ENCODE measurements at regions of chr17 and their contacts with region 1.

Region 1: DNA sequence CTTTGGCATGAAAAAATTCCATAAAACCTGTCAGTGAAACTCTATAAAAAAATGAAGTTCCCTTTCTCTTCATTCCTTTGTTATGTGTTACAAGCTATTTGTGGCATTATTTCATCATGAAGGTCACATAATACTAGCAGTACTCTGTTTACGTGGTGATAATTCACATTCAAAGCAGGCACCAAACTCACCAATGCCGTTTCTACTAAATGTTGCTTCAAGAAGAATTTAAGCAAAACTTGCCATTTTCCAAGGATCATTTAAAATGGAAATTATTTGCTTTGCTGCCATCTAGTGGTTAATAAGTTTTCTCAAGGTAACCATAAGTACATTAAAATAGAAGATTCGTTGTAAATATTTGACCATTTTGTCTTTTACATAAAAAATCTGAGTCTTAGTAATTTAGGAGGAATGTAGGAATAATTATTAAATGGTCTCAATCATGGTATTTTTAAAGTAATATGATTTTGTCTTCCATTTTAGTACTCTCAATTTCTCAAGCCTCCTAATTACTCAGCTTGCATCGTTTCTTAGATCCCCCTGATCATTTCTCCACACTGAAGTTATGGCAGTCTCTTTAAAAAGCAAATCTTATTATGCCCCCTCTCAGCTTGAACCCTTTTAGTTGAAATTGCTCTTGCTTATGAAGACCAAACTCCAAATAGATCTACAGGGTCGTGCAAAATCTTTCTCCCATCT is 80.8 kb downstream of the OMG start:
- DNase-seq: peak; percentile 59
- H3K4me3 ChIP-seq: no peak overlapping the region
- H3K27ac ChIP-seq: no peak overlapping the region
- H3K27me3 ChIP-seq: no peaks in the 10 kb centered on the region
- CTCF ChIP-seq: peak; percentile 49

Region 2: GRCh38 chr17:30970831-30971567 is 245.2 kb before region 1 on chr17 and contains the start of gene RNF135:
- CTCF ChIA-PET with region 1: interaction called, 10 read pairs
- POLR2A ChIA-PET with region 1: no interaction called
- DNase-seq: peak; percentile 59
- H3K4me3 ChIP-seq: peak within 1 kb of the TSS; percentile 71
- H3K27ac ChIP-seq: peak within 1 kb of the TSS; percentile 77
- H3K27me3 ChIP-seq: no peaks in the 10 kb centered on the region
- CTCF ChIP-seq: peak; percentile 25
- polyA plus RNA-seq, gene RNF135: 14.6 and 15.9 TPM in 2 replicates

Region 3: GRCh38 chr17:31008374-31009041 is 207.7 kb before region 1 on chr17:
- CTCF ChIA-PET with region 1: interaction called, 13 read pairs
- POLR2A ChIA-PET with region 1: no interaction called
- DNase-seq: no peak
- H3K4me3 ChIP-seq: peak overlapping the region; percentile 55
- H3K27ac ChIP-seq: peak overlapping the region; percentile 31
- H3K27me3 ChIP-seq: no peaks in the 10 kb centered on the region
- CTCF ChIP-seq: no peak

Region 4: DNA sequence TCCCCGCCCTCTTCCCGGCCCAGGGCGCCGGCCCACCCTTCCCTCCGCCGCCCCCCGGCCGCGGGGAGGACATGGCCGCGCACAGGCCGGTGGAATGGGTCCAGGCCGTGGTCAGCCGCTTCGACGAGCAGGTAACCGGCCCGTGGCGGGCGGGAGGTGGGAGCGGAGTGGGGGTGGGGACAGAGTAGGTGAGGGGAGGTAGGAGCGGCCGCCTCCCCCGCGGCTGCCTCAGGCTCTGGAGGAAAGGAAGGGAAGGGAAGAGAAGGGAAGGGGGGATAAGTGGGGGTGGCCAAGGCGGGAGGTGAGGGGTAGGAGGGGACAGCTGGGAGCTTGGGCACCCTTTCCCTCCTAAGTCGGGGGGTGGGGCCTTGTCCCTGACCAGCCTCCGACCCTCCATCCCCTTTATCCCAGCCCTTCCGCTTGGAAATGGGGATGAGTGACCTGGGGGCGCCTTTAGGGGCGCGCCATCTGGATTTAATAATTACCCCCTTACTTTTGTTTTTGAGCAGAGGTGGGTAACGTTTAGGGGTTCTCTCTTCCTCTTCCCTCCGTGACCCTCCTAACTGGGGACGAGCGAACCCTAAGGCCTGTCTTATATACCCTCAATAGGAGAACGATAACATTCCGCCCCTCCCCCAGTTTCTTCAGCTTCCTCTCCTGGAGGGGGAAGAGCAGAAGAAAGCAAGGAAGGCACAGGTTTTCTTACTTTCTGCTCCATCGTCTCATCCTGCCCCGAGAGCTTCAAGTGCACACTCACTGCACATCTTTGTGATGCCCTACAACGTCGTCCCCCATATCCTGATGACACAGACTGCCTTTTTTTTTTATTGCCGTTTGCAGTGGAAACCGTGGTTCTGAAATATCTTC is 120.7 kb before region 1 on chr17:
- CTCF ChIA-PET with region 1: interaction called, 10 read pairs
- POLR2A ChIA-PET with region 1: no interaction called
- DNase-seq: no peak
- H3K4me3 ChIP-seq: peak overlapping the region; percentile 81
- H3K27ac ChIP-seq: peak overlapping the region; percentile 85
- H3K27me3 ChIP-seq: no peaks in the 10 kb centered on the region
- CTCF ChIP-seq: no peak

Region 5: GRCh38 chr17:31130286-31131224 is 85.6 kb before region 1 on chr17:
- CTCF ChIA-PET with region 1: no interaction called
- POLR2A ChIA-PET with region 1: no interaction called
- DNase-seq: no peak
- H3K4me3 ChIP-seq: no peak overlapping the region
- H3K27ac ChIP-seq: no peak overlapping the region
- H3K27me3 ChIP-seq: no peaks in the 10 kb centered on the region
- CTCF ChIP-seq: no peak

Region 6: DNA sequence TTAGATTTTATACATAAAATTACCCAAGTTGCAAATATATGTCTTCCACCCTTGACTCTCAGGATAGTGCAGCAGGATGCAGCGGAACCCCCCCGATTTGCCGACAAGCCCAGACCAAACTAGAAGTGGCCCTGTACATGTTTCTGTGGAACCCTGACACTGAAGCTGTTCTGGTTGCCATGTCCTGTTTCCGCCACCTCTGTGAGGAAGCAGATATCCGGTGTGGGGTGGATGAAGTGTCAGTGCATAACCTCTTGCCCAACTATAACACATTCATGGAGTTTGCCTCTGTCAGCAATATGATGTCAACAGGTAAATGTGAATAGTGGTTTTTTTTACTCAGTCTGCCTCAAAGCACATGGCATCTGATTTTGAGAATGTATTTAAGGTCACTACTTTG is 10.2 kb after region 1 on chr17:
- CTCF ChIA-PET with region 1: interaction called, 11 read pairs
- POLR2A ChIA-PET with region 1: no interaction called
- DNase-seq: no peak
- H3K4me3 ChIP-seq: no peak overlapping the region
- H3K27ac ChIP-seq: no peak overlapping the region
- H3K27me3 ChIP-seq: no peaks in the 10 kb centered on the region
- CTCF ChIP-seq: no peak

Region 7: DNA sequence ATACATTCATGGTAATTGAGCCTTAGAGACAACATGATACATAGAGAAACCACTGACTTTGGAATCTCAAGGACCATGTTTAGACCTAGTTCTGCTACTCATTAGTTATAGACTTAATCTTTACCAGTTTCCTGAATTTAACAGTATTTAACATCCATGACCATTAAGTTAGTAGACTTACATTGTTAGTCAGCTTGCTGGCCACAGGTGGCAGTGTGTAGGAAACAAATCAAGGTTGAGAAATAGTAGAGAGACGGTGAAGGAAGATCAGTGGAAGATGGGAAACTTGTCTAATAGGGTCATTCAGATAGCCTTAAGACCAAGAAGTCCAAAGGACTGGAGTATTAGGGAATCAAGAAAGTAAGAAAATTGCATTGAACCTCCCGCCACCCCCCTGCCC is 49.8 kb after region 1 on chr17:
- CTCF ChIA-PET with region 1: no interaction called
- POLR2A ChIA-PET with region 1: no interaction called
- DNase-seq: no peak
- H3K4me3 ChIP-seq: no peak overlapping the region
- H3K27ac ChIP-seq: no peak overlapping the region
- H3K27me3 ChIP-seq: no peaks in the 10 kb centered on the region
- CTCF ChIP-seq: peak; percentile 17; the same call in 1 of the 2 replicates

Region 8: DNA sequence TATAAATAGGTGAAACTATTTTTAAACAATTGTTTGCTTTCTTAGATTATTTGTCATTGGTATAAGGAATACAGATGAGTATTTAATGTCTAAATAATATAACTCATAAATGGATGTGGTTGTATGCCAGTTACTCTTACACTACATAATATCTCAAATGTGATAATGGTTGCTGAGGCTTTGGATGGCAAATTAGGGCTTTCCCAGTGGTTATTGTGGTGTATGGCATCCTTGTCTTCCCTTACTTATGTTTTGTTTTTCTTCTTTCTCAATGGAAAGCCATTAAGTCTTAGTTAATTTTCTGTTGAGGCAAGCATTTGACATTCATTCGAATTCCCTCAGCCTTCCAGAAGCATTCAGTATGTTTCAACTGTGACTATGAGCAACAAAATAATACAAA is 70.4 kb after region 1 on chr17:
- CTCF ChIA-PET with region 1: no interaction called
- POLR2A ChIA-PET with region 1: no interaction called
- DNase-seq: no peak
- H3K4me3 ChIP-seq: no peak overlapping the region
- H3K27ac ChIP-seq: no peak overlapping the region
- H3K27me3 ChIP-seq: no peaks in the 10 kb centered on the region
- CTCF ChIP-seq: no peak

Region 9: DNA sequence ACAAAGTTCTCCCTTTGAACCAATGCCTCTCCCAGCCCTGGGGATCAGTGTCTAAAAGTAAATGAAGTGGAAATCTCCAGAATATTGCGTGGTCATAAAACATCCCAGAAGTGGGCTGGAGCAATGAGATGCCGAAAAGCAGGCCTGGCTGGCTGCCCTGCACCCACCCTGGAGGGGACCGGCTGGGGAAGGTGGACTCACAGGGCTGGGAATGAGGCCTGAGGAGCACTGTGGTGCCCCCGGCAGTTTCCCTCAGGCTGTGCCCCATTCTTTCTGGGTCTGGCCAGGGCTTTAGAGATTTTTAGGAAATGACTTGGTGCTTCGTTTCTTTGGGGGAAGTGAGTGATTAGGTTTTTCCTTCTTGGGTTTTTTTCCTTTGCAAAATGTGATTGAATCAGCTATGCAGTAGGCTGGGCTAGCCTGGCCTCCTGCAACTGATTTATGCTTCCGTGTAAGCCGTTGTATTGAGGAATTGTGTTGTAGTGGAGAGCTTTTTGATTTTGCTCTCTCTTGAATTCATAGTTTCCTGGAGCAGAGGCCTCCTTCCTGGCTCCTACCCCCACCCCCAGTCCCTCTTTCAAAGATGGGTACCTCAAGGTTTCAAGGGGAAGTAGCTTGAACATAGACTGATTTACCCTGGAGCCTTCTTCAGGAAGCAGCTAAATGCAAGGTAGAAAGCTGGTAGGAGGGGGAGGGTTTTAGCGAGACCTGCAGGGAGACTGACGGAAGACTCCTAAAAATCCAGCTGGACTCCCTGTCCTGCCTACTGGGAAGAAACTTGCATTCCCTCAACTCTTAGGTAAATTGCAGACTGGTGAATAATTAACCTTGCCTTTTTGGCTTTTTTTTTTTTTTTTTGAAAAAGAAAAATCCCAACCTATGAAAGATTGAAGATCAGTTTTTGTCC is 345.5 kb after region 1 on chr17:
- CTCF ChIA-PET with region 1: no interaction called
- POLR2A ChIA-PET with region 1: no interaction called
- DNase-seq: no peak
- H3K4me3 ChIP-seq: peak overlapping the region; percentile 69
- H3K27ac ChIP-seq: peak overlapping the region; percentile 78
- H3K27me3 ChIP-seq: no peaks in the 10 kb centered on the region
- CTCF ChIP-seq: no peak

Measured in AG04450 (cell line).